Activated T-helper 1 cell treated with anti-CD3 and anti-CD28 coated beads, Interleukin-12 subunit alpha, Interleukin-12 subunit beta, Interleukin-2, Interleukin-4 antibody, amounts not matched to agents 30 ng/mL and 10 ng/mL and 1 ng/mL, durations not matched to agents 14 hours and 24 hours and 36 hours (primary cell): ENCODE measurements at regions of chr14 and their contacts with region 1.

Region 1: DNA sequence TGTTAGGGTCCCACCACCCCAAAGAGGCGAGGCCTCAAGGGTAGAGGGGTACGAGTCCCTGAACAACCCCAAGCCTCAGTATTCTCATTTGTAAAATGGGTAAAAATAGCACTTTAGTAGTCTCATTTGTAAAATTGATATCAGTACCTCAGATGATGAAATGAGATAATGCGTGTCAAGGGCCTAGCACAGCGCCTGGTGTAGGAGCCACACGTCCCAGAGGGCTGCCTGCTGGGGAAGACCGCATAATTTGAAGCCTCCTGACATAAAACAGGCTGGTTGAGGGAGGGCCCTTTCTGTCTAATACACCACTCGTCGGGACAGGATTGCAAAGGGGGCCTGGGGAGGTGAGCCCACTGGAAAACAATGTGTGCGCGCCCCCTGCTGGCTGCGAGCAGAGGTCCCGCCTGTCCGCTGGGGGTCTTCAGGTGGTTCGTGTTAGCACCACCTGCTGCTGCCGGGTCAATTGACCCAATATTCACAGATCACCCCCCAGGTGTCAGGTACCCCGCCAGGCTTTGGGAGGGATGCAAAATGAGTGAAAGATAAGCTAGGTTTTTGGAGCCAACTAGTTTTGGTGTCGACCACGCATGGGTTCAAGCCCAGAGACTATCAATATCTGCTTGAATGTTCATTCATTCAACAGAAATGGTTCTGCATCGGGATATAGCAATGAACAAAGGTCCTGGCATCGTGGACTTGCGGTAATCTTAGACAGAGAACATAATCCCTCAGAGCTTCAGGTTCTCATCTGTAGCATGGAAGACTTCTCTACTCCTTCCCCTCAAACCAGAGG is 24.7 kb upstream of the IRF2BPL start:
- DNase-seq: peak; percentile 53
- H3K4me3 Mint-ChIP-seq: no peak overlapping the region
- H3K27ac Mint-ChIP-seq: peak overlapping the region; percentile 52
- H3K4me1 Mint-ChIP-seq: peaks cover 19% of the 10 kb centered on the region
- H3K27me3 Mint-ChIP-seq: peaks cover 2% of the 10 kb centered on the region

Region 2: DNA sequence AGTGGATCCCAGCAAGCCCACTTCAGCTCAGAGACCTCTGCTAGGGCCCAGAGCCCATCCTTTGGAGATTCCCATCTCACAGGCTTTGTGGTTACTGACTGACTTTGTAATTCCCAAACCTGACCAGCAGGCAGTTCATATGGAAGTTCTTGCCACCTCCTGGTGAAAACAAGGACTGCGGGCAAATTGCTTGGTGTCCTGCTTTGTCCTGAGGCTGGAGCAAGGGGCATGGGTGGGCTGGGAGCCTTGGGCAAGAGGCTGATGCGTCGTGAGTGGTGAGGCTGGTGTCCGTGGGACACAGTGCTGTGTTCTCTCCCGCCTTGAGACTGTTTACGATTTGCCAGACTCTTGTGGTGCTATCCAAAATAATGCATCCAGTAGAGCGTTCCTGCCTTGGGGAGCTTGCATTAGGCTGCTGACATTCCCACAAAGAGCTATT is 136.1 kb before region 1 on chr14:
- intact Hi-C with region 1: loop called (anchors 1 kb)
- DNase-seq: no peak
- H3K4me3 Mint-ChIP-seq: no peak overlapping the region
- H3K27ac Mint-ChIP-seq: no peak overlapping the region
- H3K4me1 Mint-ChIP-seq: peaks cover 51% of the 10 kb centered on the region
- H3K27me3 Mint-ChIP-seq: no peaks in the 10 kb centered on the region

Region 3: DNA sequence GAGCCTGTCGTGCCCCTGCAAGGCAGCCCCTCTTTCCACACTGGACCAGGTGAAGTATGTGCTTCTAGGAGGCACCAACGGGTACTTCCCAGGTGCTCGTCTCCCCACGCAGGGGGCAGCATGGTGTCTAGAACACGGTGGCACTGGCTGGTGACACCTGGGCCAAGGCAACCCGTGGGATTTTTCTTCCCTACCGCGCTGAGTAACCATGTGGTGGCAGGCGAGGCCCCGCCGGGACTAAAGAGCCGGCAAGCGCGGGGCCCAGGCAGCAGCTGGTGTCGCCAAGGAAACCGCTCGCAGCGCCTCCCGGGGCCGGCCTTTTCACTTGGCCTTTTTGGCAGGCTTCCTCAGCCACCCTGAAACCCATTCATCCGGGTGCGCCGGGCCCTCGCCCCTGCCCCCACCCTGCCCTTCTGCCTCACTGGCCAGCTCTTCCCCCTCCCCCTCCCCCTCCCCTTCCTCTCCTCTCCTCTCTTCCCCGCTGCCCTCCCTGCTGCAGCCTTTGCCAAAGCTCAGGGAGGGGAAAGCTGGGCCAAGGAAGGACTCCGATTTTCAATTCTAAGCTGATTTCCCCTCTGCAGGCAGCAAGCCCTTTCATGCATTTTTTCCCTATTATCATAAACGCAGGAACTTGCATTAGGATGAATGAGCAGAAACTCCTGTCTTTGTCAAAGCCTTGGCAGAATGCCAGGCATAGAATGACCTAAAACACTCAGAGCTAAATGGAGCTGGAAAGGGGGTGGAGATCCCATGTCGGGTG is 106.0 kb before region 1 on chr14:
- intact Hi-C with region 1: loop called (anchors 1 kb)
- DNase-seq: peak; percentile 56
- H3K4me3 Mint-ChIP-seq: no peak overlapping the region
- H3K27ac Mint-ChIP-seq: peak overlapping the region; percentile 23
- H3K4me1 Mint-ChIP-seq: peaks cover 41% of the 10 kb centered on the region
- H3K27me3 Mint-ChIP-seq: no peaks in the 10 kb centered on the region

Region 4: GRCh38 chr14:76995279-76996005 is 57.8 kb before region 1 on chr14:
- intact Hi-C with region 1: no loop called
- DNase-seq: no peak
- H3K4me3 Mint-ChIP-seq: no peak overlapping the region
- H3K27ac Mint-ChIP-seq: no peak overlapping the region
- H3K4me1 Mint-ChIP-seq: peaks cover 12% of the 10 kb centered on the region
- H3K27me3 Mint-ChIP-seq: peaks cover 4% of the 10 kb centered on the region